HEK293 (cell line): ENCODE measurements at regions of chr2 and their contacts with region 1.

Region 1: DNA sequence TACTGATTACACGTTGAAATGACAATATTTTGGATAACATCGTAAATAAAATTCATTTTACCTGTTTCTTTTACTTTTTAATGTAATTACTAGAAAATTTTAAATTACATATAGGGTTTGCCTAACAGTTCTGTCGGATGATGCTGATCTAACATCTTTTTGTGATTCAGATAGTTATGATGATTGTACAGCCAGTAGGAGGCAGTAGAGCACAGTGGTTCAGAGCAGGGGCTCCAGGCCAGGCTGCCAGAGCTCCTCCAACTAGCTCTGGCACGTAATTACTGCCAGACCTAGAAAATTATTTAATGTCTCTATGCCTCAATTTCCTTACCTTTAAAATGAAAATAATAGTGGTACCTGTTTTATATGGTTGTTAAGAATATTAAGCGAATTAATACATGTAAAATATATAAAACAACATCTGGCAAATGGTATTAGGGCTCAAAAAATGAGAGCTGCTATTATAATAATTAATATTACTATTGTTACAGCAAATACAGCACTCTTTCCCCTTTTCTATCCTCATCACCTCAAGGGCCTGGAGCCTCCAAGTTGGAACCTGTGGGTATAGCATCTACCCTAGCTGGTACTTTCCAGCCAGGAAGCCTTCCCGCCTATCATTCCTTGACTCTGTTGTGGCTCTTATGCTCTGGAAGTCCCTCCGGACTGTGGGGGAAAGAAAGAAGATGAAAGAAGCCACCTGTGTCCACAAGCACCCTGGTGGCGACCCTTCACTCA is 47.7 kb upstream of the PLA2R1 start:
- H3K4me3 ChIP-seq: no peak overlapping the region
- H3K27ac ChIP-seq: no peak overlapping the region
- H3K4me1 ChIP-seq: no peaks in the 10 kb centered on the region
- CTCF ChIP-seq: peak; percentile 54

Region 2: GRCh38 chr2:160087854-160088745 is 22.0 kb before region 1 on chr2:
- CTCF ChIA-PET with region 1: interaction called, 15 read pairs
- POLR2A ChIA-PET with region 1: no interaction called
- H3K4me3 ChIP-seq: no peak overlapping the region
- H3K27ac ChIP-seq: no peak overlapping the region
- H3K4me1 ChIP-seq: no peaks in the 10 kb centered on the region
- CTCF ChIP-seq: no peak

Region 3: DNA sequence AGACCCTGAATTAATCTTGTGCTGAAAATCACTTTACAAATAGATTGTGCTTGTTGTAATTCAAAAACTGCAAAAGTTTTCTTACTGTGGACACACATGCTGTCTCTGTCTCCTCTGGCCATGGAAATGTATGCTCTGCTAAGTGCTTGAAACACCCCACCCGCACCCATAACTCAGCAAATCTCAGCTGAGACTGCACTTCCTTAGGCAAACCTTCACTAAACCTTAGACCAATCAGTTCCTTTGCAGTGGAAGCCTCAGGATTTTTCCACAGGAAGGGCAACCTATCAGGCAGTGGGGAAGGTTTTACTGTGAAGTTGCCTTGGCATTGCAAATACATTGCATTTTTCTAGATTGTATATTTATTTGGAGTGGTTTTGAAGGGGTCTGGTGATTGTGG is 14.5 kb after region 1 on chr2:
- CTCF ChIA-PET with region 1: interaction called, 12 read pairs
- POLR2A ChIA-PET with region 1: no interaction called
- H3K4me3 ChIP-seq: no peak overlapping the region
- H3K27ac ChIP-seq: no peak overlapping the region
- H3K4me1 ChIP-seq: no peaks in the 10 kb centered on the region
- CTCF ChIP-seq: no peak

Region 4: DNA sequence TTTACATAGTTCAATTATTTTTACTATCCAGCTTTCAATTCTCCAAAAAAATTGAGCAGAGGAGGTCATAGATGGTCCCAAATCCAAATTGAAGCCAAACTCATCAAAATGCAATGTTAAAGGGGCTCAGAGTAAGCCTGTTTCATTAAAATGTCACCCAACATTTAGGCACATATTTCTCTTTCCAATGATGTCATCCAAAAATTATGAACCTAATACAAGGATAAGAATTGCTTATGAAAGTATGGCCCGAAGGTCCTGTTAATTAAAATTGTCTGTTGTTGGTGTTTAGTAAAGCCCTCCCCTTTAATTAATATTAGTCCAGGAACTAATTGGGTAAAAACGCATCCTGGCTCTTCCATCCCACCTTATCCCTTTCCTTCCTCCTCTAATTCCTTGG is 62.9 kb after region 1 on chr2:
- CTCF ChIA-PET with region 1: no interaction called
- POLR2A ChIA-PET with region 1: no interaction called
- H3K4me3 ChIP-seq: no peak overlapping the region
- H3K27ac ChIP-seq: no peak overlapping the region
- H3K4me1 ChIP-seq: no peaks in the 10 kb centered on the region
- CTCF ChIP-seq: no peak

Region 5: GRCh38 chr2:160252278-160252887 is 142.3 kb after region 1 on chr2:
- CTCF ChIA-PET with region 1: interaction called, 16 read pairs
- POLR2A ChIA-PET with region 1: no interaction called
- H3K4me3 ChIP-seq: no peak overlapping the region
- H3K27ac ChIP-seq: no peak overlapping the region
- H3K4me1 ChIP-seq: no peaks in the 10 kb centered on the region
- CTCF ChIP-seq: 0 out of 2 replicates have a peak, but pooled peaks have one; percentile 35

Region 6: DNA sequence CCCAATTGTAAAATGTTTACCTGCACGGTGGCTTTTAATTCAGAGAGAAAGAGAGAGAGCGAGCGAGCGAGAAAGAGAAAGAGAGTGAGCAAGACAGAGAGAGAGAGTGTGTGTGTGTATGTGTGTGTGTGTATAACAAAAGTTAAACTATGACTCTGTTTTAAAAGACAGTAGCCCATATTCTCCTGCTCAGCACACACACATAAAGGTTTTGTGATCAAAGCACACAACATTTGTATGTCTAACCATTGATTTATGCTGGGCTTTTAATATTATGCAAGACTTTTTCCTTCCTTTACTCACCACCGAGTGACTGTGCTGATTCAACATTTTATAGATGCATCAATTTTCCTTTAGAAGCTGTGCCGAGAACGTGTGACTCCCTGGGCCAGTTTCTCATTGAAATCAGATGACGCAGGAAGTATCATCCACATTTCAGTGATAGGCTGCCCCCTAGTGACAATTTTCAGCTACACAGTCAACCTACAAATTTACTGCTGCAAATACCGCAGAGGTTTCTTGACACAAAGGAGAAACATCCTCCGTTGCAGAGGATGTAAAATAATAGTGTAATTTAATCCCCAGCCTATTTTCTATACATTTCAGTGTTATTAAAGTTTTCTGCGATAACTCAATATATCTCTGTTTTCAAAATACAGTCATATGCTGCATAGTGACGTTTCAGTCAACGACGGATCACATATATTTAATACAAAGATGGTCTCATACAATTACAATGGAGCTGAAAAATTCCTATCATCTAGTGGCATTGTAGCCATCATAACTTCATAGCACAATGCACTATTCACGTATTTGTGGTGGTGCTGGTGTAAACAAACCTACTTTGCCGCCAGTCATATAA is 884.3 kb after region 1 on chr2:
- CTCF ChIA-PET with region 1: interaction called, 15 read pairs
- POLR2A ChIA-PET with region 1: no interaction called
- H3K4me3 ChIP-seq: no peak overlapping the region
- H3K27ac ChIP-seq: no peak overlapping the region
- H3K4me1 ChIP-seq: 0 out of 2 replicates have a peak, but pooled peaks cover 2% of the 10 kb centered on the region
- CTCF ChIP-seq: peak; percentile 71; the same call in 1 of the 2 replicates